Activated CD4-positive, alpha-beta memory T cell treated with anti-CD3 and anti-CD28 coated beads for 36 hours (primary cell): ENCODE measurements at regions of chr12 and their contacts with region 1.

Region 1: GRCh38 chr12:113103756-113104450 is 31.7 kb downstream of the RASAL1 start:
- DNase-seq: peak; percentile 84
- H3K4me3 Mint-ChIP-seq: peak overlapping the region; percentile 70
- H3K27ac Mint-ChIP-seq: peak overlapping the region; percentile 69
- H3K4me1 Mint-ChIP-seq: peaks cover 10% of the 10 kb centered on the region
- H3K27me3 Mint-ChIP-seq: no peaks in the 10 kb centered on the region

Region 2: DNA sequence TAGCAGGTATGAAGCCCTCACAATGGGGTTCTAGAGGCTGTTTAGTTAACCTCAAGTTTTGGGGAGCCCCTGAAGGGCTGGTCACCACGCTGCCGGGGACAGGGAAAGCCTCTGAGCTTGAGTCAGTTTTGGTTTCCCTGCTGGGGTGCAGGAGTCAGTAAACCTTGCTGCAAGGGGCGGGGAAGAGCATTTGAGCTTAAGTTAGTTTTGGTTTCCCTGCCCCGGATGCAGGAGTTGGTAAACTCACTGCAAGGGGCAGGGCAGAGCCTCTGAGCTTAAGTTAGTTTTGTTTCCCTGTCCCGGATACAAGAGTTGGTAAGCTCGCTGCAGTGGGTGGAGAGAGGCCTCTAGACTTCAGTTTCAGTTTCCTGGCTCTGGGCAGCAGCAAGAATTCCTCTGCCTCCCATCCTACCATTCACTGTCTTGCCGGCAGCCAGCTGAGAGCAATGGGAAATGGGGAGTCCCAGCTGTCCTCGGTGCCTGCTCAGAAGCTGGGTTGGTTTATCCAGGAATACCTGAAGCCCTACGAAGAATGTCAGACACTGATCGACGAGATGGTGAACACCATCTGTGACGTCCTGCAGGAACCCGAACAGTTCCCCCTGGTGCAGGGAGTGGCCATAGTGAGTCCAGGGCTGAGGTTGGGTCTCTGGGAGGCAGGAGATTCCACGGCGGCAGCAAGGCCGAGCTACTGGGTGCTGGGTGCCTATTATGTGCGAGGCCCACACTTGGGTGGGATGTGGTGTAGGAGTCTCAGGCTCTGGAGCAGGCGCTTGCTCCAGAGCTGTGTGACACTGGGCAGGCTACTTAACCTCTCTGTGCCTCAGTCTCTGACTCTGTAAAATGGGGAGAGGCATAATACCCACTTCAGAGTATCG is 125.5 kb before region 1 on chr12 and contains the start of gene OAS2:
- CTCF ChIA-PET with region 1: no interaction called
- POLR2A ChIA-PET with region 1: no interaction called
- intact Hi-C with region 1: no loop called
- DNase-seq: peak; percentile 91
- H3K4me3 Mint-ChIP-seq: peak within 1 kb of the TSS; percentile 81
- H3K27ac Mint-ChIP-seq: peak within 1 kb of the TSS; percentile 100
- H3K4me1 Mint-ChIP-seq: peaks cover 24% of the 10 kb centered on the region
- H3K27me3 Mint-ChIP-seq: no peaks in the 10 kb centered on the region
- total RNA-seq, gene OAS2: 140 to 148 TPM

Region 3: DNA sequence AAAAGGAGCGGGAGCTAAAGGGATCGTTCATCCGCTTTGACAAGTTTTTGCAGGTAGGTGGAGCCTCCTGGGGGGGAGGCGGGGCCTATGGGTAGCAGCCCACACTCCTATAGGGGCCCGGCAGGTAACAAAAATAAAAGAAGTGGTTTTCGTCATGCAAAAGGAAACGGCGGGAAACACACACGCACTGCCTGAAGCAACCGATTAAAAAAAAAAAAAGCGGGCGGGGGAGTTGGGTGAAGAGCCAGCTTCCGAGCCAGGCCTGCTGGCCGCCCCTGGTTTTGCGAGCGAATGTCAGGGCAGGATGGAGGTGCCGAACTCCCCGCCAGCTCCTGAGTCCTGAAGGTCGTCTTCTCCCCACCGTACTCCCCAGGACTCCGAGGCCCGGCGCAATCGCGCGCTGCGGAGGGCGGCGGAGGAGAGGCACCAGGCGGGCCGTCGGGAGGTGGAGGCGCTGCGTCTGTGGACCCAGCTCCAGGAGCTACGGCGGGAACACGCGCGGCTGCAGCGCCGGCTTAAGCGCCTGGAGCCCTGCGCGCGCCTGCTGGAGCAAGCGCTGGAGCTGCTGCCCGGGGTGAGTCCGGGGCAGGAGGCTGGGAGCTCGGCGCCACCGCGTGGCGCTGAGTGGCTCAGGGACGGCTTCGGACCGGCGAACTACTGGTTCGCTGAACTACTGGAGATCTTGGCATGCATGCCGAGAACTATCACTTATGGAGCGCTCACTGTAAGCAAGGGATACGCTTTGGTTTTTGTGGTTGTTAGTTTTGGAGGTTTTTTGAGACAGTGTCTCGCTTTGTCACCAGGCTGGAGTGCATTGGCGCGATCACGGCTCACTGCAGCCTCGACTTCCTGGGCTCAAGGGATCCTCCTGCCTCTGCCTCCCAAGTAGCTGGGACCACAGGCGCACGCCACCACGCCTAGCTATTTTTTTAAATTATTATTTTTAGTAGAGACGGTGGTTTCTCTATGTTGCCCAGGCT is 49.2 kb after region 1 on chr12:
- CTCF ChIA-PET with region 1: interaction called, 5 read pairs
- POLR2A ChIA-PET with region 1: no interaction called
- intact Hi-C with region 1: loop called (anchors 2 kb)
- DNase-seq: peak; percentile 76
- H3K4me3 Mint-ChIP-seq: peak overlapping the region; percentile 73
- H3K27ac Mint-ChIP-seq: no peak overlapping the region
- H3K4me1 Mint-ChIP-seq: peaks cover 23% of the 10 kb centered on the region
- H3K27me3 Mint-ChIP-seq: peaks cover 8% of the 10 kb centered on the region